Breast epithelium (tissue), 4 donors: ENCODE measurements at regions of chr5 and their contacts with region 1.

Region 1: DNA sequence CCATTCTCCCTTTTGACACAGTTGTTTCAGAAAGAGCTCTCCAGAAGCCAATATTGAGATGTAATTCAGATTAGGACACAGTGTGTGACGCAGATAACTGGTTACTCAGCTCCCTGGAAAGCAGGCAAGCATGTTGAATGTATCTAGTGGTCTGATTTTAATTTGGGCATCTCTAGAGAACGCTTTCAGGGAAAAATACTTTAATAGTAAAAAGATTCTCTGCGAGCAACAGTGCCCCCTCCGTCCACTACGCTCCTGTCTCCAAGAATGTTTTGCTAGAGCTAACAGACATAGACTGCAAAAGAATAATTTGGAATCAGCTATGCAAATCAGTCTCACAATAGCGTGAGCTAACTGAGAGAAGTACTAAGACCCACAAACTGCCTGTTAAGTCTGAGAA is 23.3 kb downstream of the CFAP90 start:
- DNase-seq: no peak
- H3K4me3 ChIP-seq: no peak overlapping the region
- H3K27ac ChIP-seq: no peak overlapping the region
- H3K4me1 ChIP-seq: no peaks in the 10 kb centered on the region
- H3K27me3 ChIP-seq: no peaks in the 10 kb centered on the region
- CTCF ChIP-seq: peak in 1 of 3 donors; percentile 21
- POLR2A ChIP-seq: no peak

Region 2: DNA sequence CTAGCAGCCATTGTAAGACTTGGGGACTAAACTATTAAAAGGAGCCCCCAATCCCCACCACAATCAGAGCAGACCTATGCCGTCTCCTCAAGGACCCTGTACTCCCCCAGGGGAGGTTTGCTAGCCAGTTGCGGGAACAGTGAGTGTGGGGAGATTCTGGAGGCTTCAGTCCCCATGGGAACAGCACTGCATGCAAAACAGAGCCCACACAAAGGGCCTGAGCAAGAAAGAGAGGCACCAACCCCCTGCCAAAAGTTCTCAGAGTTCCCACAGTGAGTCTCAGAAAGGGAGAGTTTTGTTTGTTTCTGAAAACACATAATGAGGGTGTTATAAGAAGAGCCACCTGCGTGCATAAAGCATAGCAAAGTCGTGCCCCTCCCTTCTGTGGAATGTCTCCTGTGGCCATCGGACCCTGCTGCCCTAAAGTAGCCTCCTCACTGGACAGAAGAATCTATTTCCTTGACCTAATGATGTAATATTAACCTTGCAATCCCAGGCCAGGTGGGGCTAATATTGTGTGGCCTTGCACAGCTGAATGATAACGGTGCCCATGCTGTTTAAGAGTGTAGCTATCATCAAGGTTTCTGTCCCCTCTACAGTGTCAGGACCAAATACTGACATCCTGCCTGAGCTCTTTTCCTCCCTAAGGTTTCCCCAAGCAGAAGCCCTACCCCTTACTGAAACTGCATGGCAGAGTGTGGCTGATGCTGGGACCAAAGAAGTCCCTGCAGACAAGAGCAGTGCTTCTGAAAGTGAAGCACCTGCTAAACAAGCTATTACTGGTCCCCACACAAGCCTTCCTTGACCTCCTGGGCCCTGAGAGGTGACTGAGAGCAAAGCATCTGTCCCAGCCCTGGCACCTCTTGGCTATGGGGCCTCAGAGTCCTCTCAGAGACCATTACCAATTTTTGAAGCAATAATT is 33.0 kb before region 1 on chr5:
- intact Hi-C with region 1: loop called (anchors 1 kb)
- DNase-seq: no peak
- H3K4me3 ChIP-seq: no peak overlapping the region
- H3K27ac ChIP-seq: no peak overlapping the region
- H3K4me1 ChIP-seq: no peaks in the 10 kb centered on the region
- H3K27me3 ChIP-seq: no peaks in the 10 kb centered on the region
- CTCF ChIP-seq: no peak
- POLR2A ChIP-seq: no peak

Region 3: GRCh38 chr5:7815892-7816534 is 11.6 kb before region 1 on chr5:
- intact Hi-C with region 1: loop called (anchors 1 kb)
- DNase-seq: peak; percentile 34 to 78
- H3K4me3 ChIP-seq: no peak overlapping the region
- H3K27ac ChIP-seq: no peak overlapping the region
- H3K4me1 ChIP-seq: no peaks in the 10 kb centered on the region
- H3K27me3 ChIP-seq: no peaks in the 10 kb centered on the region
- CTCF ChIP-seq: peak in 2 of 3 donors; percentile 65 to 69
- POLR2A ChIP-seq: no peak